Activated T-helper 1 cell treated with anti-CD3 and anti-CD28 coated beads, Interleukin-12 subunit alpha, Interleukin-12 subunit beta, Interleukin-2, Interleukin-4 antibody, amounts not matched to agents 30 ng/mL and 10 ng/mL and 1 ng/mL, durations not matched to agents 14 hours and 24 hours and 36 hours (primary cell): ENCODE measurements at regions of chr6 and their contacts with region 1.

Region 1: DNA sequence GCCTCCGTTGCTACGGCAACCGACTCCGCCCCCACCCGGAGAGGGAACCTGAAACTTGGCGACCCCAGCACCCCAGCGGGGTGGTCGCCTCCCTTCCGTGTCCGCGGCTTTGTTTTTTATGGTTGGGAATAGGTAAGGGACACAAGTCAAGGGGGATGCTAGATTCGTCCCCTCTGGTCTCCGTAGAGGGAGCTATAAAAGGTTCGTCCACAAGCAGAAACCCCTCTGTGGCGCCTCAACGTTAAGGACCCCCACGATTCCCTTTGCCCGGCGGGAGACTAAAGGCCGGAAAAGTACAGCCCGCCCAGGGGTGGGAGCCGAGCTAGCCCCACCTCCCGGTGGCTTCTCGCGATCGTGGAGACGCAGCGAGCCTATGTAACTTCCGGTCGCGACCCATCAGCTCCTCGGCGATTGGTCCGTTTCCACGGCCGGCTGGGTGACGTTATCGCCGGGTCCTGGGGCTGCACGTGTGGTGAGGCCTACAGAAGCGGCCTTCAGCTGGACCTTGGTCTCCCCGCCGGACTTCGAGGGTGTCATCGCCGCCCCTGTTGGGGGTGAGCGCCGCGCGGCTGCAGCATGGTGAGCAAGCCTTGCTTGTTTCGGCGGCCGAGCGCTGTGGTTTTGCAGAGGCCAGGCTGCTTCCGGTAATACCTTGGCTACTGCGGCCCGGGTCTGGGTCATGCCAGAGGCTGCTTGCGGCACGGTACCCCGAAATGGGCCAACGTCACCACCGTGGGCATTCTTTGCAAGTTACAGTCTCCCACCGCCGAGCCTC is at the start of gene LTV1:
- DNase-seq: peak; percentile 88
- H3K4me3 Mint-ChIP-seq: peak within 1 kb of the TSS; percentile 95
- H3K27ac Mint-ChIP-seq: peak within 1 kb of the TSS; percentile 95
- H3K4me1 Mint-ChIP-seq: peaks cover 29% of the 10 kb centered on the region
- H3K27me3 Mint-ChIP-seq: no peaks in the 10 kb centered on the region
- total RNA-seq, gene LTV1: 63.0 and 67.9 TPM in 2 replicates

Region 2: DNA sequence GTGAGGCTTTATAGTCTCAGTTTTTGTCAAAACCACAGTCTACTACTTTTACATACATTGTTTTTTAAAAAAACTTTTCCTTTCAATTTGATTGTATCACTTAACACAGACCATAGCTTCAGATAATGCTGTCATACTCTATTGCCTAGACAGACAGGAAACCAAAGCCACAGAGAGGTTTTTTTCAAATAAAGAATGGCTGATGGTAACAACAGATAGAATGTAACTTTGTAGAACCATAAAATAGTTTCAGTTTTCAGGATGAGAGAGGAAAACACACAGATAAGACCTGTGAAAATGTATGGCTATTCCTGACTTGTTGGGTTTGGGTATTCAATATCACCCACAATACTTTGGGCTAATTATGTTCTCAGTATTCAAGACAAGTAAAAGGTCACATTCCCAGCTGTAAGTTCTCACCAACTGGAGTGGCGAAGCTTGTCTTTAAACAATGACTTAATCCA is 1447.3 kb before region 1 on chr6:
- intact Hi-C with region 1: loop called (anchors 1 kb)
- DNase-seq: peak; percentile 12
- H3K4me3 Mint-ChIP-seq: no peak overlapping the region
- H3K27ac Mint-ChIP-seq: peak overlapping the region; percentile 10
- H3K4me1 Mint-ChIP-seq: peaks cover 15% of the 10 kb centered on the region
- H3K27me3 Mint-ChIP-seq: peaks cover 56% of the 10 kb centered on the region

Region 3: DNA sequence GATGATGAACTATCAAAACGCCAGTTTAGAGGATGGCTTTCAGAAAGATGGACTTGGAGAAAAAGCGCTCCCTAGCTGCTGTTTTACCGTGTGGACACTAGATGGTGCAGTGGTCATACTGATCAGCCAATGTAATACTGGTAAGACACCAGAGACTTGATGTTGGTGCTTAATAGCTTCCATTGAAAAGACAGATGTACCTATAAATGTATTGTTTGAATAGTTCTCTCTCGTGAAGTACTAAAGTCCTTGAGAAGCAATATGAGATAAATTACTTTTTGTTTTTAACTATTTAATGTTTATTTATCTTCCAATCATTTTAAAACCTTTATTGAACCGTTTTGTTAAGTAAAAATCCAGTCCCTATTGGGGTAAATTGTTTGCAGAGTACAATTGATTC is 267.6 kb before region 1 on chr6:
- intact Hi-C with region 1: loop called (anchors 1 kb)
- DNase-seq: peak; percentile 48
- H3K4me3 Mint-ChIP-seq: no peak overlapping the region
- H3K27ac Mint-ChIP-seq: no peak overlapping the region
- H3K4me1 Mint-ChIP-seq: peaks cover 12% of the 10 kb centered on the region
- H3K27me3 Mint-ChIP-seq: no peaks in the 10 kb centered on the region

Region 4: DNA sequence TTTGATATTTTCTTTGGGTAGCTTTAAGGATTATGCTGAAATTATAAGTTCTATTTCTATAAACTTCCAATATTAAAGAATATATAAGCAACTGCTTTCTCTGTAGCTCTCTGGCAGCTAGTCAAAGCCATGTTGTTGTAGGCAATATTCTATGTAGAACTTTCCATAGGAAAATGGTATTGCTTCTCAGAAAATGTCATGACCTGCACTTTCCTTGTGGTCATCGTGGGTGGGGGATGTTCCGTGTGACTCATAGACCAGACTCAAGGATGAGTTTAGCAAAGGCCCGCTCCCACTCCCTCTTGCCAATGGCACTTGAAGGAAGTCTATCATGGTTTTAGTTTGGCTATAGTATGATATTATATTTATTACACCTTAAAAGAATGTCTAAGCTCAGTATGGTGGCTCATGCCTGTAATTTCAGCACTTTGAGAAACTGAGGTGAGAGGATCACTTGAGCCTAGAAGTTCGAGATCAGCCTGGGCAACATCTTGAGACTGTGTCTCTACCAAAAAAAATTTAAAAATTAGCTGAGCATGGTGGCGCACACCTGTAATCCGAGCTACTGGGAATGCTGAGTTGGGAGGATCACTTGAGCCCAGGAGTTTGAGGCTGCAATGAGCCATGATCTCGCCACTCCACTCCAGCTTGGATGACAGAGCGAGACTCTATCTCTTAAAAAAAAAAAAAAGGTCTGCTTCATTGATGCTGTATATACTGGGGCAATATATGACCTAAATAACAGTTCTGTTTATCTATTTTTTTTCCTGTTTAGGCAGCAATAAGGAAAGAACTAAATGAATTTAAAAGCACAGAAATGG is 36.6 kb before region 1 on chr6:
- intact Hi-C with region 1: loop called (anchors 1 kb)
- DNase-seq: peak; percentile 48
- H3K4me3 Mint-ChIP-seq: peak overlapping the region; percentile 56
- H3K27ac Mint-ChIP-seq: peak overlapping the region; percentile 94
- H3K4me1 Mint-ChIP-seq: peaks cover 55% of the 10 kb centered on the region
- H3K27me3 Mint-ChIP-seq: peaks cover 3% of the 10 kb centered on the region

Region 5: GRCh38 chr6:144013486-144013909 is 170.4 kb after region 1 on chr6:
- intact Hi-C with region 1: loop called (anchors 2 kb)
- DNase-seq: peak; percentile 24
- H3K4me3 Mint-ChIP-seq: no peak overlapping the region
- H3K27ac Mint-ChIP-seq: no peak overlapping the region
- H3K4me1 Mint-ChIP-seq: no peaks in the 10 kb centered on the region
- H3K27me3 Mint-ChIP-seq: peaks cover 25% of the 10 kb centered on the region

Region 6: GRCh38 chr6:144095331-144096002 is 252.4 kb after region 1 on chr6 and contains the start of gene SF3B5:
- intact Hi-C with region 1: loop called (anchors 1 kb)
- DNase-seq: peak; percentile 96
- H3K4me3 Mint-ChIP-seq: peak within 1 kb of the TSS; percentile 96
- H3K27ac Mint-ChIP-seq: peak within 1 kb of the TSS; percentile 98
- H3K4me1 Mint-ChIP-seq: peaks cover 39% of the 10 kb centered on the region
- H3K27me3 Mint-ChIP-seq: no peaks in the 10 kb centered on the region
- total RNA-seq, gene SF3B5: 204 and 232 TPM in 2 replicates

Region 7: DNA sequence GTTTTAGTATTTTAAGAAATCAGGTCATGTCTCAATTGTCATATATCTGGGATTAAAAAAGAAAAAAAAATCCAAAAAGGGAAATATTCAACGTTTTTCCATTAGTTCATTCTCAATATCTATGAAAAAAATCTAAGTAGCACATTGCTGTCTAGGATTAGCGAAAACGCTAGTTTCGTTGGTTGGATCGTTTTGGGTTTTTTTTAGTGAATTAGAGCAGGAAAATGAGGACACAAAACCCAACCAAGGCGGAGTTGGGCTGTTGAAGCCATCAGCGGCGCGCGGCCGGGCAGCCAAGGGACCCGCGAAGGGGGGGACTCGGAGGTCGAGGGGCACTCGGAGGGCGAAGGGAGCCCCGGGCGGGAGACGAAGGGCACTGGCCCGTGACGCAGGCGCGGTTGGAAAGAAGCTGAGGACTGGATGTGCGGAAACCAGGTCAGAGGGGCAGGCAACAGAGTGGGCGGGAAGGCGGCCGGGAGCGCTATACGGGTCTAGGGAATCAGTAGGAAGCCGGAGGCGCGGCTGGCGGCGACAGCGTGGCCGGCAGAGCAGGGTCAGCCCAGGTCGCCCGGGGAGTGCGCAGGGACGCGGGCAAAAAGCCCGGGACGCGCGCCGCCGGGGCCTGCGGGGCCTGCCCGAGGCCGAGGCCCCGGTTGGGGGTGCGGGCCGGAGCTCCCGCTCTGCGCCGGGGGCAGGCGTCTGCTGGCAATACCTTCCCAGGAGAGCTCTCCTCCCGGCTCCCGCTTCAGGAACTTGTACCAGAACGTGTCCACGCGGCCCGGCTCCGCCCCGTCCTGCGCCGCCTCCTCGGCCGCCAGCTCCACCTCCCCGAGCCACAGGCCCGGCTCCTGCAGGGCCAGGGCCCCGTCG is 1891.6 kb after region 1 on chr6:
- intact Hi-C with region 1: loop called (anchors 5 kb)
- DNase-seq: peak; percentile 52
- H3K4me3 Mint-ChIP-seq: peak overlapping the region; percentile 94
- H3K27ac Mint-ChIP-seq: peak overlapping the region; percentile 96
- H3K4me1 Mint-ChIP-seq: peaks cover 26% of the 10 kb centered on the region
- H3K27me3 Mint-ChIP-seq: no peaks in the 10 kb centered on the region